ENCODE measurements at regions of chr12 and their contacts with region 1.

Region 1: GRCh38 chr12:66301944-66302826 is at the start of gene HELB:
- DNase-seq: peak; percentile 99
- H3K4me3 Mint-ChIP-seq: peak within 1 kb of the TSS; percentile 99
- H3K27ac Mint-ChIP-seq: peak within 1 kb of the TSS; percentile 99
- H3K4me1 Mint-ChIP-seq: peaks cover 39% of the 10 kb centered on the region
- H3K27me3 Mint-ChIP-seq: no peaks in the 10 kb centered on the region
- total RNA-seq, gene HELB: 20.8 to 21.8 TPM

Region 2: DNA sequence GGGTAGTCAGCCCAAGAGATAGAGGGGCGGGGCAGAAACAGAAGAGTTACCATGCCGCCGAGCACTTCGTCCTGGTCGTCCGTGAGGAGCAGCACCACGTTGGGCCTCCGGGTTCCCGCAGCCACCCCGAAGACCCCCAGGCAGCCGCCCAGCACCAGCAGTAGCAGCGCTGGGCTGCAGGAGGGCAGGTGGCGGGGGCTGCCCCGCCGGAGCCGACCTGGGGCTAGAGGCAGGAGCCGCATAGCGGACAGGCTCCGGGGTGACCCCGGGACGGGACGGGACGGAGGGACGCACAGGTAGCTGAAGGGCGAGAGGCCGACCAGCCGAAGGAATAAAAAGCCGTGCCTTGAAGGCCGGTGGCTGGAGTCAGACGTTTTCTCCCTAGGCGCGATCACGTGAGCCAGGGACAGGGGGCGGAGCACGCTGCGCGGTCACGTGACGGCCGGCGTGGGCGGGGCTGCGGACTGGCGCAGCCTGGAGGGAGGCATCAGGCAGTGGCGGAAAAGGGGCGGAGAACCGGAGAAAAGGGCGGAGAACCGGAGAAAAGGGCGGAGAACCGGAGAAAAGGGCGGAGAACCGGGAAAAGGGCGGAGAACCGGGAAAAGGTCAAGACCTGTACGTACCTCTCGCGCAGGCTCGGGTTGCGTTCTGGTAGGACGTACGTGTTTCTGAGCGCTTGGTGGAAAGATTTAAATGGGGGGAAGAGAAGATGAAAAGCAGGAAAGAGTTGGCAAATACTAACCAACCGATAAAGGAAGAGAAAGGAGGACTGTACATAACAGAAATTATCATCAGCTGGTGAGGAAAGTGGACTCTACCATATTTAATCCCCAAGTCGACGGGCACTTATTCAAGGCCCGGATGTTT is 1542.9 kb before region 1 on chr12 and contains the start of gene GNS:
- CTCF ChIA-PET with region 1: no interaction called
- POLR2A ChIA-PET with region 1: no interaction called
- intact Hi-C with region 1: loop called (anchors 2 kb)
- DNase-seq: peak; percentile 97
- H3K4me3 Mint-ChIP-seq: peak within 1 kb of the TSS; percentile 85
- H3K27ac Mint-ChIP-seq: peak within 1 kb of the TSS; percentile 90
- H3K4me1 Mint-ChIP-seq: peaks cover 43% of the 10 kb centered on the region
- H3K27me3 Mint-ChIP-seq: no peaks in the 10 kb centered on the region
- total RNA-seq, gene GNS: 21.2 to 23.1 TPM

Region 3: DNA sequence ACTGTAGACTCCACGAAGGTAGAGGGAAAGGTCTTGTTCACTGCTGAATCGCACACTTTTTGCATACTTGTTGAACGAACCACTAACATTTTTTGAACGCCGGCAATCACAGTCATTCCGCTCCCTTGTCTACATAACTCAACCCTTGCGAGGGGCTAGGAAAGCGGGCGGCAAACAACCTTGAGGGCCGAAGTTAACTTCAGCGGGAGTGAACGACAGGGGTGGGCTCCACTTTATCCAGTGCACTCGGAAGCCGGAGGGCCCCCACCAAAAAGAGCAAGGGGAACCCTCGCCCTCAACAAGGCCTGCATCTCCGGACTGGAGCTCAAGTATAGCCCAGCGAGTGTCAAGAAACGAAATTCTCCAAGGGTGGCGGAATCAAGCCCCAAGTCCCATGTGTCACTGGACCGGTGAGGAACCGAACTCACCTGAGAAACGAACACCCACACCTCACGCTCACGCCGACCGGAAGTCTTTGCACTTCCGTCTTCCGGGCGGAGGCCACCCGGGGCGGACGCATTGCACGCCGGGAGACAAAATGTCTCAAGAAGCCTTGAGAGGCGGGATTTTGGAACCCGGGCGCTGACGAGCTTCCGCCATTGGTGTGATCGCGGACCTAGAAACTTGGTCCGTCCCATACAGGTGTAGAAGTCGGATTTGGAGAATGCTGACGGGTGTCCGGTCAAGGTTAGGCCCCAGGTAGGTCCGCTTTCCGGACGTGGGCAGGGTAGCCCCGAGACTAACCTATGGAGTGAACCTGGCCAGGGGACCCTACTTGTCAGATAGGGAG is 171.7 kb before region 1 on chr12 and contains the start of gene LLPH:
- CTCF ChIA-PET with region 1: no interaction called
- POLR2A ChIA-PET with region 1: interaction called, 3 read pairs
- intact Hi-C with region 1: loop called (anchors 1 kb)
- DNase-seq: peak; percentile 94
- H3K4me3 Mint-ChIP-seq: peak within 1 kb of the TSS; percentile 96
- H3K27ac Mint-ChIP-seq: peak within 1 kb of the TSS; percentile 94
- H3K4me1 Mint-ChIP-seq: peaks cover 50% of the 10 kb centered on the region
- H3K27me3 Mint-ChIP-seq: no peaks in the 10 kb centered on the region
- total RNA-seq, gene LLPH: 29.1 to 31.2 TPM

Region 4: GRCh38 chr12:66269757-66270383 is 32.3 kb before region 1 on chr12:
- CTCF ChIA-PET with region 1: interaction called, 10 read pairs
- POLR2A ChIA-PET with region 1: interaction called, 9 read pairs
- intact Hi-C with region 1: loop called (anchors 1 kb)
- DNase-seq: peak; percentile 30
- H3K4me3 Mint-ChIP-seq: no peak overlapping the region
- H3K27ac Mint-ChIP-seq: no peak overlapping the region
- H3K4me1 Mint-ChIP-seq: peaks cover 4% of the 10 kb centered on the region
- H3K27me3 Mint-ChIP-seq: no peaks in the 10 kb centered on the region

Region 5: GRCh38 chr12:66288121-66288520 is 14.1 kb before region 1 on chr12:
- CTCF ChIA-PET with region 1: interaction called, 4 read pairs
- POLR2A ChIA-PET with region 1: interaction called, 14 read pairs
- intact Hi-C with region 1: loop called (anchors 1 kb)
- DNase-seq: peak; percentile 67
- H3K4me3 Mint-ChIP-seq: peak overlapping the region; percentile 49
- H3K27ac Mint-ChIP-seq: peak overlapping the region; percentile 44
- H3K4me1 Mint-ChIP-seq: peaks cover 62% of the 10 kb centered on the region
- H3K27me3 Mint-ChIP-seq: no peaks in the 10 kb centered on the region

Region 6: DNA sequence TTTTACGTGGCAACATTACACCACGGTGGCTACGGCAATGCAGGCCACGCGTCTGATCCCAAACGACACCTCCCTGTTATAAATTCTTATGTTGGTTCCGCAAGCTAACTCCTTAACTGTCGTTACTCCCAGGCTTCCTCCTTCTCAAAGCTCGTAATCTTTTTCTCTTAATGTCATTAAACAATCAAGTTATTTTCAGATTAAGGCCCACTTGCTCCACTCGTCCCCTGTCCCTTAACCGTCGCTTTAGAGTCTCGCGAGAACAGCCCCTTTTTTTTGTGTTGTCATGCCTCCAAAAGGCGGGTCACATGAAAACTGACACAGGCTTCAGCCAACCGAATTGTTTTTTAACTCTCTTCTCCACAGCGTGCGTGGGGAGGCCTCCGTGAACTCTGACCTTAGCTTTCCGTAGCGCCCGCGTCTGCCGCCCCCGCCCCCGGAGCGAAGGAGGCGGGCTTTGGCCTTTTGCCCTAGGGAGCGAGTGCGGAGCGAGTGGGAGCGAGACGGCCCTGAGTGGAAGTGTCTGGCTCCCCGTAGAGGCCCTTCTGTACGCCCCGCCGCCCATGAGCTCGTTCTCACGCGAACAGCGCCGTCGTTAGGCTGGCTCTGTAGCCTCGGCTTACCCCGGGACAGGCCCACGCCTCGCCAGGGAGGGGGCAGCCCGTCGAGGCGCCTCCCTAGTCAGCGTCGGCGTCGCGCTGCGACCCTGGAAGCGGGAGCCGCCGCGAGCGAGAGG is 966.9 kb after region 1 on chr12 and contains the start of gene CAND1:
- CTCF ChIA-PET with region 1: no interaction called
- POLR2A ChIA-PET with region 1: no interaction called
- intact Hi-C with region 1: loop called (anchors 2 kb)
- DNase-seq: peak; percentile 96
- H3K4me3 Mint-ChIP-seq: peak within 1 kb of the TSS; percentile 95
- H3K27ac Mint-ChIP-seq: peak within 1 kb of the TSS; percentile 98
- H3K4me1 Mint-ChIP-seq: peaks cover 31% of the 10 kb centered on the region
- H3K27me3 Mint-ChIP-seq: no peaks in the 10 kb centered on the region
- total RNA-seq, gene CAND1: 213 to 219 TPM